Activated CD4-positive, alpha-beta memory T cell treated with anti-CD3 and anti-CD28 coated beads for 36 hours (primary cell): ENCODE measurements at regions of chr1 and their contacts with region 1.

Region 1: GRCh38 chr1:150321826-150322166 is 463 bp downstream of the PRPF3 start:
- DNase-seq: no peak
- H3K4me3 Mint-ChIP-seq: peak overlapping the region; percentile 99
- H3K27ac Mint-ChIP-seq: peak overlapping the region; percentile 97
- H3K4me1 Mint-ChIP-seq: peaks cover 27% of the 10 kb centered on the region
- H3K27me3 Mint-ChIP-seq: no peaks in the 10 kb centered on the region

Region 2: GRCh38 chr1:150213170-150214098 is 108.4 kb before region 1 on chr1:
- CTCF ChIA-PET with region 1: no interaction called
- POLR2A ChIA-PET with region 1: no interaction called
- intact Hi-C with region 1: loop called (anchors 1 kb)
- DNase-seq: peak; percentile 96
- H3K4me3 Mint-ChIP-seq: peak overlapping the region; percentile 87
- H3K27ac Mint-ChIP-seq: peak overlapping the region; percentile 96
- H3K4me1 Mint-ChIP-seq: peaks cover 14% of the 10 kb centered on the region
- H3K27me3 Mint-ChIP-seq: no peaks in the 10 kb centered on the region

Region 3: DNA sequence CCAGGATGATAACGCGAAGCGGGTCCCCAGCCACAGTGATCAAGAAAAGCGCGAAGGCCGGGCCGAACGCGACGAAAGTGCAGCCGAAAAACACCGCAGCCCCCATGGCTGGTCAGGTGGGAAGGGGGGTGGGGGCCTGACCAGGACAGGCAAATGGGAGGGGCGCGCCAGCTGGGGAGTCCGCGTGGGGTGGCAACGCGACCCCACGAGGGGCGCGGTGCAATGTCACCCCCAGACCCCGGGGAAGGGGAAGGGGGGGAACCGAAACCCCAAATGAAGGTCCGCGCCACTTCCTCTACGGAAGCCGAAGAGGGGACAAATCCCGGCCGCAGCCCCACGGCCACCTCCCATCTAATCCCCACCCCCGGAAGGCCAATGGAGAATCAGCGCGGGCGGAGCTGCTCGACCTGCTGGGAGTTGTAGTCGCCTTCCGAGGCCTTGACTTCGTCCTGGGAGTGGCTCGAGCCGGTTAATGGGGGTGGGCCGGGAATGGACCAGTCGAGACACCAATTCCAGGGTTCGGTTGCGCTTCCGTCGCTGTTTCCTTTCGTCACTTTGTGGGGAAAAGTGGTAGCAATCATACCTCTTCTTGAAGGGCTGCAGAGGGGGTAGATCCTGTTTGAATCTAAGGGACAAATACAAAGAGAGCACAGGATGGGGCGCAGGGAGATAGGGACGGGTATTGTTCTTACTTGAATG is 52.9 kb before region 1 on chr1 and contains the start of gene APH1A:
- CTCF ChIA-PET with region 1: interaction called, 3 read pairs
- POLR2A ChIA-PET with region 1: interaction called, 4 read pairs
- intact Hi-C with region 1: loop called (anchors 2 kb)
- DNase-seq: peak; percentile 97
- H3K4me3 Mint-ChIP-seq: peak within 1 kb of the TSS; percentile 97
- H3K27ac Mint-ChIP-seq: peak within 1 kb of the TSS; percentile 93
- H3K4me1 Mint-ChIP-seq: peaks cover 22% of the 10 kb centered on the region
- H3K27me3 Mint-ChIP-seq: no peaks in the 10 kb centered on the region
- total RNA-seq, gene APH1A: 96.6 to 96.8 TPM

Region 4: DNA sequence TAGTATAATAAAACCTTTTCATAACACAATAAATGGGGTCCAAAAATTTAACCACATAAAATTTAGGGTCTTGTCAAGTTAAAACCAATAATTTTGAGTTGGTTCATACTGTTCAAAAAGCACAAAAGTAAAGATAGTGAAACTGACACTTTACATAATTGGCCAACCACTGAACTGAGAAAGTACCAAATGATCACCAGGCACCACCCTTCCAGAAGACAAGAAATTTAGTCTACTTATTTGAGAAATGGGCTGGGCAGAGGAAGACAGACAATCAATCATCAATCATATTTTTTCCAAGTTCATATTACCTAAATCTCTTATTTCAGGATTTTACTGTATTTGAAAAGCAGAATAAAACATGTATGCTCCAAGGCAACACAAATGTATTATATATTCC is 381.6 kb after region 1 on chr1:
- CTCF ChIA-PET with region 1: no interaction called
- POLR2A ChIA-PET with region 1: no interaction called
- intact Hi-C with region 1: no loop called
- DNase-seq: no peak
- H3K4me3 Mint-ChIP-seq: no peak overlapping the region
- H3K27ac Mint-ChIP-seq: no peak overlapping the region
- H3K4me1 Mint-ChIP-seq: peaks cover 4% of the 10 kb centered on the region
- H3K27me3 Mint-ChIP-seq: peaks cover 4% of the 10 kb centered on the region